OCI-LY7 (cell line): ENCODE measurements at regions of chr6 and their contacts with region 1.

Region 1: GRCh38 chr6:11700118-11700718 is 78.4 kb downstream of the ADTRP start:
- DNase-seq: peak; percentile 49
- H3K4me3 ChIP-seq: no peak overlapping the region
- H3K27ac ChIP-seq: no peak overlapping the region
- H3K4me1 ChIP-seq: no peaks in the 10 kb centered on the region
- CTCF ChIP-seq: peak; percentile 78

Region 2: DNA sequence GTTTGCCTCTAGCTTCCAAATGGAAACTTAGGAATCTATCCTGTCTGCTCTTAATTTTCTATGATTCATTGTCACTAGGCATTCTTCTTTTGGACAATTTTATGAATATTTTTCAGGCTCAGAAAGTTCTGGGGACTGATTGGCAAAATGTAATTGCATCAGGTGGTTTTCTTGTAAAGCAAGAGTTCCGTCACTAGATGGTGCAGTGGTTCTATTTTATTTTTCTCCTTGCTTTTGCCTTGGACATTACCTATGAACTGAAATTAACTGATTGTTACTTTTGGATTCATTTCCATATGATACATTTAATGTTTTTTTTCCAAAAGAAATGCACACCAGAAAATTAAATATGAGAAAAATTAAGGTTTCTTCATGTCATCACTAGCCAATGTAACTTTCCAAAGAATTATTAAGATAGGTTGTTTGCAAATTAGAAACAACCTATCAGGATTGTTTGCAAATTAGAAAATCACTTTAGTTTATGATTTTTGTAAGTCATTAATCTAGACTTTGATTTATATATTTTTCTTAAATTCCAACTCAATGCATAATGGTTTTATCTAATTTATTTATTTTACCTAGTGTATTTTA is 114.7 kb before region 1 on chr6:
- CTCF ChIA-PET with region 1: no interaction called
- POLR2A ChIA-PET with region 1: interaction called, 4 read pairs
- intact Hi-C with region 1: loop called (anchors 5 kb)
- DNase-seq: peak; percentile 43
- H3K4me3 ChIP-seq: no peak overlapping the region
- H3K27ac ChIP-seq: no peak overlapping the region
- H3K4me1 ChIP-seq: no peaks in the 10 kb centered on the region
- CTCF ChIP-seq: peak; percentile 88

Region 3: DNA sequence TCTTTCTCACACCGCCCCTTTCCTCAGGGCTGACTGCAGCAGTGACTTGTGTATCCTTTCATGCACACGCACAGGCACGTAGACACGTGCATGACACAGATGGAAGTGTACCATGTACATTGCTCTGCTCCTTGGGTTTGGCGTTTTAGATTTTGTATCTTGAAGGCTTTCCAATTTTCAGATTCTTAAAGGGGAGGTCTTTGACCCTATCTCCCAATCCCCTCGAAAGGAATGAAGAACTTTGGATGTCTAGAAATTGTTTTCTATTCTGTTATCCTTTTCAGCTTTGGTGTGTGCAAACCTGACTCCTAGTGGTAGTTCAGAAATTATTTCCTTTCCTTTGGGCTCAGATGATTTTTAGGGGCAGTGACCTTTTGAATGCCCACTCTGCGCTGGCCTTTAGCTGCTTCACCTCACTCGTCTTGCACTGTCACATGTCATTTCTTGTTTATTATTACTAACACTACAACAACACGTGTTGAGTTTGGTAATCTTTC is 374.9 kb after region 1 on chr6:
- CTCF ChIA-PET with region 1: no interaction called
- POLR2A ChIA-PET with region 1: no interaction called
- intact Hi-C with region 1: loop called (anchors 10 kb)
- DNase-seq: peak; percentile 14
- H3K4me3 ChIP-seq: no peak overlapping the region
- H3K27ac ChIP-seq: no peak overlapping the region
- H3K4me1 ChIP-seq: no peaks in the 10 kb centered on the region
- CTCF ChIP-seq: peak; percentile 73

Region 4: DNA sequence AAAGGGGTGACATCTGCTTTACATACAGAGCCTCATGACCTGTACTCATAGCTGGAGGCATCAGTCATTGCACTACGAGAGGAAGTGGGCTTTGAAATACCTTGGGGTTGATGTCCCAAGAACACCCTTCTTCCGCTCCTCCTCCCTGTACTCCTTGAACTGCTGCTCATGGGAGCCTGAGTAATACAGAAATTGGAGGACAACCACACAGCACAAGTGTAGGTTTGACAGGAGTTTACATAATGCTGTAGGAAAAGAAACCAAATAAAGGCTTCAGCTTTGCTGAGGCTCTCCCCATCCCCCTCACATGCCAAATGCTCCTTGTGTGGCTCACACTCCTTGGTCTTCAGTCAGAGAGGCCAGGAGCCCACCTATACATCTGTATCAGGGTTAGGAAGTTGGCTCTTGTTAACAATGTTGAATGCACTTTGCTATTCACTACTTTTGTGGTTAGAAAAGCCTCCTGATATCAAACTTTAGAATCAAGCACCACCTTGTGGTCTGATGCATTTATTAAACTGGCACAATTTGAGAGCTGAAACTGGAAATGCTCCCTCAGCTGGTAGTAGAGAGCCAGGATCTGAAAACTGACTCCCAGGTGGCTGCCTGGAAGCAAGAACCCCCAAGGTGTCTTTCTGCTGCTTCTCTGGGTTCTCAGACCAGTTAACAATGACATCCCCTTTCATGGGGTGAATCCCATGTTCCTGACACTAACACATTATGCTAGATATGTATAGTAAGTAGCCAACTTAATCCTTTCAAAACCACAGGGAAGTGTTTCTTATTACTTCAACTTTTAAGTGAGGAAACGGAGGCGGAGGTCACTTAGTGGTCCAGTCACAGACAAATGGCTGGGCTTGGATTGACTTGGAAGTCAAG is 533.7 kb after region 1 on chr6:
- CTCF ChIA-PET with region 1: interaction called, 3 read pairs
- POLR2A ChIA-PET with region 1: no interaction called
- intact Hi-C with region 1: loop called (anchors 1 kb)
- DNase-seq: peak; percentile 69
- H3K4me3 ChIP-seq: no peak overlapping the region
- H3K27ac ChIP-seq: no peak overlapping the region
- H3K4me1 ChIP-seq: no peaks in the 10 kb centered on the region
- CTCF ChIP-seq: peak; percentile 89

Region 5: DNA sequence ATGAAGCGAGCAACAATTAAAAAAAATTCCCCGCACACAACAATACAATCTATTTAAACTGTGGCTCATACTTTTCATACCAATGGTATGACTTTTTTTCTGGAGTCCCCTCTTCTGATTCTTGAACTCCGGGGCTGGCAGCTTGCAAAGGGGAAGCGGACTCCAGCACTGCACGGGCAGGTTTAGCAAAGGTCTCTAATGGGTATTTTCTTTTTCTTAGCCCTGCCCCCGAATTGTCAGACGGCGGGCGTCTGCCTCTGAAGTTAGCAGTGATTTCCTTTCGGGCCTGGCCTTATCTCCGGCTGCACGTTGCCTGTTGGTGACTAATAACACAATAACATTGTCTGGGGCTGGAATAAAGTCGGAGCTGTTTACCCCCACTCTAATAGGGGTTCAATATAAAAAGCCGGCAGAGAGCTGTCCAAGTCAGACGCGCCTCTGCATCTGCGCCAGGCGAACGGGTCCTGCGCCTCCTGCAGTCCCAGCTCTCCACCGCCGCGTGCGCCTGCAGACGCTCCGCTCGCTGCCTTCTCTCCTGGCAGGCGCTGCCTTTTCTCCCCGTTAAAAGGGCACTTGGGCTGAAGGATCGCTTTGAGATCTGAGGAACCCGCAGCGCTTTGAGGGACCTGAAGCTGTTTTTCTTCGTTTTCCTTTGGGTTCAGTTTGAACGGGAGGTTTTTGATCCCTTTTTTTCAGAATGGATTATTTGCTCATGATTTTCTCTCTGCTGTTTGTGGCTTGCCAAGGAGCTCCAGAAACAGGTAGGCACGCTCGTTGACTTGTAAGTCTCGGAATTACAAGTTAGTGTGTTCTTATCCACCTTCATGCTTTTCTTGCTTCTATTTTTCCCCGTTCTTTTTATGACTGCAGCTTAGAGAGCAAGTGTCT is 590.0 kb after region 1 on chr6 and contains the start of gene EDN1:
- CTCF ChIA-PET with region 1: no interaction called
- POLR2A ChIA-PET with region 1: interaction called, 3 read pairs
- intact Hi-C with region 1: loop called (anchors 5 kb)
- DNase-seq: peak; percentile 57
- H3K4me3 ChIP-seq: peak within 1 kb of the TSS; percentile 57
- H3K27ac ChIP-seq: no peak within 1 kb of the TSS
- H3K4me1 ChIP-seq: no peaks in the 10 kb centered on the region
- CTCF ChIP-seq: peak; percentile 36; the same call in 1 of the 2 replicates
- total RNA-seq, gene EDN1: not detected in 2 replicates